Gastrocnemius medialis (tissue), 4 donors: ENCODE measurements at regions of chr4 and their contacts with region 1.

Region 1: GRCh38 chr4:123832173-123833026 is 435.8 kb downstream of the SPRY1 start:
- DNase-seq: peak; percentile 77 to 82
- ATAC-seq: peak; percentile 92 to 95
- H3K4me3 ChIP-seq: peak overlapping the region; percentile 31 to 43 (median 38)
- H3K27ac ChIP-seq: peak overlapping the region; percentile 84 to 92 (median 90)
- H3K4me1 ChIP-seq: peaks cover 18 to 24% of the 10 kb centered on the region in 2 donors
- H3K27me3 ChIP-seq: no peaks in the 10 kb centered on the region
- CTCF ChIP-seq: peak in 1 of 5 experiments; percentile 9
- POLR2A ChIP-seq: no peak

Region 2: DNA sequence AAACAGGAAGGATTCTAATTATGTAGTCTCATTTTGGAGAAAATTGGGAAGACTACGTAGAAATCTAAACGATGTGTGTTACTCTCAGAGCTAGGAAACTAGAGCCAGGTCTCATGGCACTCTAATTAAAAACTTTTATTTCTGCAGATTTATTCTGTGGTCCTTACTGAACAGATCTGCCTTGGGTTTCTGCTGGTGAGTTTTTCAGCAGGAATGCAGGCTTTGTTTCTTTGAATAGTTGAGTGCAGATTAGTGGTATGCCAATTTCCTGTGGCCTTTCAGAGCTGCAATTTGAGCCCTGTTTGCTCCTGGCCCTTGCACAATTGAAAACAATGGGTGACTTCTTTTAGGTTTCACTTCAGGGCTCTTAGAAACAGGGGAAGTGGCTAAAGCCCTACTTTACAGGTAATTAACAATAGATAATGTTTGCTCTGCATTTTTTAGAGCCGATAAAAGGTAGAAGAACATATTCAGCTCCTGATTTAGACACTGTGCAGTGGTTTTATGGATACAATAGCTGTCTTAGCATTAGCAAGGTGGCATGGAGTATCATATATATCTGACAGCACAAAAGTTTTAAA is 414.0 kb before region 1 on chr4:
- in situ Hi-C with region 1: loop called in 2 of 4 experiments (anchors 25 kb)
- intact Hi-C with region 1: no loop called
- DNase-seq: peak; percentile 22 to 48
- ATAC-seq: peak; percentile 92 to 96
- H3K4me3 ChIP-seq: peak overlapping the region in 1 of 4 donors; percentile 20
- H3K27ac ChIP-seq: peak overlapping the region; percentile 56 to 79 (median 78)
- H3K4me1 ChIP-seq: peaks cover 23 to 25% of the 10 kb centered on the region in 2 donors
- H3K27me3 ChIP-seq: no peaks in the 10 kb centered on the region
- CTCF ChIP-seq: no peak
- POLR2A ChIP-seq: no peak

Region 3: GRCh38 chr4:123588631-123589241 is 243.7 kb before region 1 on chr4:
- in situ Hi-C with region 1: no loop called
- intact Hi-C with region 1: loop called (anchors 5 kb)
- DNase-seq: peak; percentile 13 to 41
- ATAC-seq: peak; percentile 81 to 86
- H3K4me3 ChIP-seq: peak overlapping the region; percentile 3 to 14 (median 9)
- H3K27ac ChIP-seq: peak overlapping the region; percentile 84 to 91 (median 87)
- H3K4me1 ChIP-seq: peaks cover 14 to 21% of the 10 kb centered on the region in 2 donors
- H3K27me3 ChIP-seq: no peaks in the 10 kb centered on the region
- CTCF ChIP-seq: no peak
- POLR2A ChIP-seq: peak in 1 of 2 donors; percentile 50

Region 4: GRCh38 chr4:123870061-123870876 is 37.9 kb after region 1 on chr4:
- in situ Hi-C with region 1: no loop called
- intact Hi-C with region 1: loop called (anchors 1 kb)
- DNase-seq: no peak
- ATAC-seq: no peak
- H3K4me3 ChIP-seq: no peak overlapping the region
- H3K27ac ChIP-seq: peak overlapping the region; percentile 32 to 75 (median 62)
- H3K4me1 ChIP-seq: peaks cover 27 to 30% of the 10 kb centered on the region in 2 donors
- H3K27me3 ChIP-seq: no peaks in the 10 kb centered on the region
- CTCF ChIP-seq: no peak
- POLR2A ChIP-seq: no peak

Region 5: DNA sequence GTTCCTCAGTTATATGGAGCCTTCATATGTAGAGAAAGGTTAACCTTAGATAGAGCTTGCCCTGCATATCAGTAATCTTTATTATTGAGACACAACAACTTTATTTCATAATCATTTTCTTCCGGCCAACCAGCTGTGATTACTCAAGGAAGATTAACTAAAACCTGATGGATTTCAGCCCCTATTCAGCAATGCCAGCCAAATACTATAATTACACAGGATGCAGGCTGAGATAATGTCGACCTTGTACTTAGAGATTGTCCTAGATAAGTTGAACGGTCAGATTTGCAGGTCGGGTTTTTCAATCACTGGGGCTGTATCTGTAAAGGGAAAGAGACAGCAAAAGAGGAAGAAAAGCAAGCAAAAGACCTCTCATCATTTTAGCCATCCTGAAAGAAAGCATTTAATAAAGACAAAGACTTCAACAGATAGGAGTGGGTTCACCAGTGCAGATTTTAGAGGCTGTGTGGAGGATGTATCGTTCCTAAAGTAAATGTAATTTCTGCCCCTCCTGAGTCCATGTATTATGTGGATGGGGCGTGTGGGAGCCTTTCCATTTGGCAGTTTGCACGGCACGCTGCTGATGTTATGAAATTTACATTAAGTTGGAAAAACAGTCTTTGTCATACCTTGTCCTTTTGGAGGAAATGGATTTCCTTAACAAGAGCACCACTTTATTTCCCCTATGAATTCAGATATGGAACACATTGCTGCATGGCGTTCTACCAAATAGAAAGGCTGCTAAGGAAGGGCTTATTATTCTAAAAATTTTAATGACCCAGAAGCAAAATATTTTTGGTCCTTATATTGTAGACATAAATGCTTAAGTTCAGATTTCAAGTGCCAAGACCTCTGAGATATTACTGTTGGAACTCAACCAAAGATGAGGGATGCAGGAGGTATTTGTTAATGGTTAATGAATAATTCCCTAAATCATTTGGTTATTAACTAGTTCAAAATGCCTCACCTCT is 60.9 kb after region 1 on chr4:
- in situ Hi-C with region 1: no loop called
- intact Hi-C with region 1: loop called (anchors 2 kb)
- DNase-seq: peak in 1 of 2 donors; percentile 16
- ATAC-seq: peak; percentile 31 to 61
- H3K4me3 ChIP-seq: peak overlapping the region in 1 of 4 donors; percentile 7
- H3K27ac ChIP-seq: peak overlapping the region; percentile 55 to 73 (median 63)
- H3K4me1 ChIP-seq: peaks cover 49 to 56% of the 10 kb centered on the region in 2 donors
- H3K27me3 ChIP-seq: no peaks in the 10 kb centered on the region
- CTCF ChIP-seq: no peak
- POLR2A ChIP-seq: no peak

Region 6: GRCh38 chr4:124936427-124936826 is 1104.0 kb after region 1 on chr4:
- in situ Hi-C with region 1: no loop called
- intact Hi-C with region 1: loop called (anchors 2 kb)
- DNase-seq: peak; percentile 85 to 90
- ATAC-seq: peak; percentile 99
- H3K4me3 ChIP-seq: no peak overlapping the region
- H3K27ac ChIP-seq: peak overlapping the region; percentile 23 to 73 (median 61)
- H3K4me1 ChIP-seq: peaks cover 37 to 39% of the 10 kb centered on the region in 2 donors
- H3K27me3 ChIP-seq: no peaks in the 10 kb centered on the region
- CTCF ChIP-seq: no peak
- POLR2A ChIP-seq: no peak